ENCODE measurements at regions of chr17 and their contacts with region 1.

Region 1: GRCh38 chr17:55859301-55859795 is 108.5 kb downstream of the PCTP start:
- DNase-seq: no peak
- ATAC-seq: no peak
- H3K4me3 ChIP-seq: no peak overlapping the region
- H3K4me3 Mint-ChIP-seq: no peak overlapping the region
- H3K27ac ChIP-seq: no peak overlapping the region
- H3K27ac Mint-ChIP-seq: no peak overlapping the region
- H3K4me1 ChIP-seq: no peaks in the 10 kb centered on the region
- H3K4me1 Mint-ChIP-seq: no peaks in the 10 kb centered on the region
- H3K27me3 ChIP-seq: no peaks in the 10 kb centered on the region
- H3K27me3 Mint-ChIP-seq: peaks cover 3% of the 10 kb centered on the region
- CTCF ChIP-seq: no peak

Region 2: DNA sequence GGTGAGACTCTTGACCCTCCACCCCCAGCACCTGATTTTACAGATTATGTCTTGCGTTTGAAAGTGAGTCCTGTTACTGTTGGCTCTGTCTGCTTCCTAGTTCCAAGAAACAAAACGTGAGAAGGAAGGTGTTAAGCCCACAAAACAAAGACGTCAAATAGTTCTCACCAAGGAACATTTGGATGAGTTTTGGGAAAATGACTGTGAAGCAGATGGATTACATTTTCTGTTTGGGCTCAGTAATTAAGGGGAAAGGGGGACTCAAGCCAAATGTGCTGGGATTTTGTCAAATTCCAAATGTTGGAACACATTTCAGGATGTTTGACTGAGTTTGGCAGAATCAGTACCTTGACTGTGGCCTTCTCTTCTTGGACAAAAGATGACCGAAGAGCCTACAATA is 37.3 kb before region 1 on chr17:
- CTCF ChIA-PET with region 1: no interaction called
- POLR2A ChIA-PET with region 1: no interaction called
- intact Hi-C with region 1: loop called in 1 of 2 experiments (anchors 5 kb)
- DNase-seq: no peak
- ATAC-seq: no peak
- H3K4me3 ChIP-seq: no peak overlapping the region
- H3K4me3 Mint-ChIP-seq: no peak overlapping the region
- H3K27ac ChIP-seq: no peak overlapping the region
- H3K27ac Mint-ChIP-seq: no peak overlapping the region
- H3K4me1 ChIP-seq: no peaks in the 10 kb centered on the region
- H3K4me1 Mint-ChIP-seq: peaks cover 4% of the 10 kb centered on the region
- H3K27me3 ChIP-seq: no peaks in the 10 kb centered on the region
- H3K27me3 Mint-ChIP-seq: peaks cover 6% of the 10 kb centered on the region
- CTCF ChIP-seq: no peak

Region 3: DNA sequence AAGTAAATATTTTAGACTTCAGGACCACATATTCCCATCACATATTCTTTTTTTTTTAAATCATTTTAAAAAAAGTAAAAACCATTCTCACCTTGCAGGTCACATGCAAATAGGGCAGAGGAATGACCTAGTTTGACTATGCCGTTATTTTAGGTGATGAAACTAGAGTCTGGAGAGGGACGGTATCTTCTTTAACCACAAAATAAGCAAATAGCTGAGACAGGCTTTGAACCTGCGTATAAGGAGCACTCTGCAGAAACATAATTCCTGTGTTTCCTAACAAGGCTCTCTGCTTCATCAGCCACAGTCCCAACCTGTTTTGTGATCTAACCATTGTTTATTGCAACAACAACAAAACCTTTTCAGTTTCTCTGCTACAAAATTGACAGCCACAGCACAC is 13.0 kb after region 1 on chr17:
- CTCF ChIA-PET with region 1: no interaction called
- POLR2A ChIA-PET with region 1: no interaction called
- intact Hi-C with region 1: no loop called
- DNase-seq: no peak
- ATAC-seq: no peak
- H3K4me3 ChIP-seq: no peak overlapping the region
- H3K4me3 Mint-ChIP-seq: no peak overlapping the region
- H3K27ac ChIP-seq: no peak overlapping the region
- H3K27ac Mint-ChIP-seq: no peak overlapping the region
- H3K4me1 ChIP-seq: no peaks in the 10 kb centered on the region
- H3K4me1 Mint-ChIP-seq: no peaks in the 10 kb centered on the region
- H3K27me3 ChIP-seq: no peaks in the 10 kb centered on the region
- H3K27me3 Mint-ChIP-seq: no peaks in the 10 kb centered on the region
- CTCF ChIP-seq: no peak